Right ventricle myocardium inferior (tissue), 1 donor: ENCODE measurements at regions of chr4 and their contacts with region 1.

Region 1: GRCh38 chr4:158768555-158769174 is at the start of gene FNIP2:
- DNase-seq: peak; percentile 93
- ATAC-seq: peak; percentile 95
- total RNA-seq, gene FNIP2: 46.2 TPM

Region 2: DNA sequence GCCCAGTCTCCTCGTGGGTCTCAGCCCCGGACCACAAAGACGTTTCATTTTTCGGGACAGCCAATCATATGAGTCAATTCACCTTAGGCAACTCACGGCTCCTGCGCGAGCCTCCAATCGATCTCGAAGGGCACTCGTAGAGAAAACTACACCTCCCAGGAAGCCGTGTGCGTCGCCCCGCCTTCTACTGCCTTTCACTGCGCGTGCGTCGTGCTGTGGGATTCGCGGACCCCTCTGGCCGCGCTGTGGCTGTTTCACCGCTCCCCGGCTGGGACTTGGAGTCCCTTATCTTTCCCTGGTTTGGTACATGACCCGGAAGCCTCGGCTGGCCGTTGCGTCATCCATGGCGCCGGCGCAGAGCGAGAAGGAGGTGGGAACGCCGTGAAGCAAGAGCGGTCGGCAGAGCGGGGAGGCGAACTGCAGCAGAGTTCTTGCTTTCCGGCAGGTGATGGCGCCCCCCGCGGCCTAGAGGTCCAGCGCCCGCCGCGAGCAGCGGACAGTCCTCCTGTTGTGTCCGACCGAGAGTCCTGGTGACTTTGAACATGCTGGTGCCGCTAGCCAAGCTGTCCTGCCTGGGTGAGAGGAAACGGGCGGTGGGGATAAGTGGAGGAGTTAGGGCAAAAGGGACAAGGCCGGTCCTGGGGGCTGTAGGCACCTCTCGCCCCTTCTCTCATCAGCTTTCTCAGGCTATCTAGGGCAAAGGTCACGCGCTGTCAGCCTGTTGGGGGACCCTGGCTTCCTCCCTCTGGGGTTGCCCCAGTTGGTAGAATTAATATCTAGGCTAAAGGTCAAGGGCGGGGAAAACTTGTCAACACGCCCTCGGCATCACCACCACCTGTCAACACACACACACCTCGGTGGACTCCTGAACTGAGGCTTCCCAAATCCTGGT is 96.5 kb before region 1 on chr4 and contains the start of gene ETFDH:
- intact Hi-C with region 1: loop called (anchors 5 kb)
- DNase-seq: peak; percentile 99
- ATAC-seq: peak; percentile 96
- total RNA-seq, gene ETFDH: 383 TPM

Region 3: GRCh38 chr4:158729716-158730559 is 38.7 kb before region 1 on chr4:
- intact Hi-C with region 1: loop called (anchors 5 kb)
- DNase-seq: no peak
- ATAC-seq: peak; percentile 93

Region 4: DNA sequence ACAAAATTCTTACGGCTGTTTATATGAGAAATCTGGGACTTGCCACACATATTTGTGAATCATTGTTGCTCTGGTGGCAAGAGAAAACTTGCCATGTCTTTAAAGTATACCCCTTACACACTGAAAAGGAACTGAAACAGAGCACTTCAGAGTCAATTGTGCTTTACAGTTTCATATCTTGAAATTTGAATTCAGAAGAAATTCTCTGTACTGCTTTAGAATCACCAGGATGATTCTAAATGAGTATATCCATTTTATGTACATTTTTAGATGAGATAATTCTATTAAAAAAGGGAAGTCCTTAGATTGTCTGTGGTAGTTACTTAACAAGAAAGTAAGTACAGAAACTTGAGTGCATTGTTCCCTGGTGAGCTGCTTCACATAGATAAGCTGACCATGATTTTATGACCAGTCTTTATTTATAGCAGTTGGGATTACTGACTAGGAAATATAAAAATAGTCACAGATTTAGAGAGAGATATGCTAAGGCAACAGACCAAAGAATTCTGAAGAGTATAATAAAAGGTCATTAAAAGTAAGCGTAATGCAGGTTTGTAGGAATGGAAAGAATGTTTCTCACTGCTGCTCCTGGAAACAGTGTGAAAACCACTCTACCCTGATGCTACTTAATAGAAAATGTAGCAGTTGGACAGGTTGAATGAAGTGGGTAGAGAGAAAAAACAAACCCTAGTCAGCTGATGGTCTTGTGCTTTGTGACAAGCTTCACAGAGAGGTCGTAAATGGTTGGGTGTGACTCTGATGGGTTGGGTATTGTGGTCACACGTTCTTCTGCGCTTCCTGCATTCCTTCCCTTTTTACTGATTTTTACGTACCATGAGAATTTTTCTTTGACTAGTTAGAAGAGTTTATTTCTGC is 41.2 kb after region 1 on chr4:
- intact Hi-C with region 1: loop called (anchors 5 kb)
- DNase-seq: no peak
- ATAC-seq: peak; percentile 40

Region 5: DNA sequence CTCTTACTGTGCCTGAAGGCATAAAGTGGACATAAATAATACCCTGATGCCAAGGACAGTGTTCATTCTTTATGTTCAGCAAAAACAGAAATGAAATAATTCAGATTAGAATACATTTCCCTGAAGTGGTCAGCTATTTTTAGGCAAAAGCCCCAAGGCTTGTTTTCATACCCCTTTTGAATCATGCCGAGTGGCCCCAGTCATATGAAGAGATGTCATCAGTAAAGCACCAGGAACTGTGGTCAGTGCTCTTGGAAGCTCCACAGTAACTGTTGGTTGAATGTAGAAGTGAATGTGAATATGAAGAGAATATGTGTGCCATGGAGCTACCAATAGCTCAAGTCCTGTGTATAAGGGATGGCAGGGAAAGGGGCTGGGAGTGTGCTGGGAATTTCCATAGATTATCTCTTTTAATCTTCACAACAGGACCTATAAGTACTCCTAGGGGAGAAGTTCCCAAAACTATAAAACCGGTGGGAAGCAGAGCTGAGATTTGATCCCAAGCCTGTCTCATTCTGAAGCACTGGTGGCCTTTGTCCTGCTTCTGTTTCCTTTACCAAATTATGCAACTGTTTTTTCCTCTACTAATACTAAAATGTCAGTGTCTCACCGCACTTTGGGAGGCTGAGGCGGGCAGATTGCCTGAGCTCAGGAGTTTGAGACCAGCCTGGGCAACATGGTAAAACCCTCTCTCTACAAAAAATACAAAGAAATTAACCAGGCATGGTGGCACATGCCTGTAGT is 52.7 kb after region 1 on chr4:
- intact Hi-C with region 1: loop called (anchors 5 kb)
- DNase-seq: no peak
- ATAC-seq: no peak

Region 6: GRCh38 chr4:158850800-158851644 is 82.4 kb after region 1 on chr4:
- intact Hi-C with region 1: loop called (anchors 2 kb)
- DNase-seq: no peak
- ATAC-seq: no peak

Region 7: DNA sequence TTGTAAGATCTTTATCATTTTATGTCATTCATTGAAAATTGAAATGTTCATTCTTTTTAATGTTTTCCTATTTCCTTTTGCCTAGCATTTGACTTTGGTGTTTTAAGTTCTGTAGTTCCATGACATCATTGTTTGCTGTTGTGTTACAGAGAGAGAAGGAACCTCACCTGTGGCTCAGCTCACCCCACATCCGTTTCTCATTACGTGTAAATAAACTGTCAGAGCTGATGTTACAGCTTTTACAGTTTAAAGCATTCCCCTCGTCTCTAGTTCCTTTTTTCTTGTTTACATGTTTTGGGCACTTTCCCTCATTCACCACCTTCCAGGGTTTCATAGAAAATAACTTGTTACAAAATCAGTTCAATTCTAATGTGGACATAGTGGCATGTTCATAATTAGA is 137.4 kb after region 1 on chr4:
- intact Hi-C with region 1: no loop called
- DNase-seq: no peak
- ATAC-seq: no peak